Activated T-helper 1 cell treated with anti-CD3 and anti-CD28 coated beads, Interleukin-12 subunit alpha, Interleukin-12 subunit beta, Interleukin-2, Interleukin-4 antibody, amounts not matched to agents 30 ng/mL and 10 ng/mL and 1 ng/mL, durations not matched to agents 14 hours and 24 hours and 36 hours (primary cell): ENCODE measurements at regions of chr2 and their contacts with region 1.

Region 1: GRCh38 chr2:147082850-147083522 is 761.8 kb upstream of the ACVR2A start:
- DNase-seq: peak; percentile 49
- H3K4me3 Mint-ChIP-seq: no peak overlapping the region
- H3K27ac Mint-ChIP-seq: no peak overlapping the region
- H3K4me1 Mint-ChIP-seq: peaks cover 24% of the 10 kb centered on the region
- H3K27me3 Mint-ChIP-seq: peaks cover 5% of the 10 kb centered on the region

Region 2: DNA sequence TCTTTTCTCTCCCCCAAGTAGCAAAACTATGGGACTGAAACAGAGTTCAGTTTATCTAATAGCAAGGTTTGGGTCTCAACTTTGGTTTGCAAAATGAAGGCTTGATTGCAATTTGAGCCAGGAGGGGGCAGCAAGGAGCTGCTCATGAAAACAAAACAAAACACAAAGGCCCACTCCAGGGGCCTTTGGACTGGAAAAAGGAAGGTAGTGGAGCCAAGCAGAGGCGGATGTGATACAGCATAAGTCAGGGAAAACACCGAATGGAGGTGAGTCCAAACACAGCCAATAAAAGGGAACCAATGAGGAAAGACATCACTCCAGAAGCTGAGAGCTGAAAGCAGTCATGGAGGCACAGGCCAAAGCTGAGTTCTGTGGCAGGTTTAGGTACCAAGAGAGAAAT is 37.9 kb before region 1 on chr2:
- intact Hi-C with region 1: loop called (anchors 1 kb)
- DNase-seq: peak; percentile 5
- H3K4me3 Mint-ChIP-seq: no peak overlapping the region
- H3K27ac Mint-ChIP-seq: peak overlapping the region; percentile 7
- H3K4me1 Mint-ChIP-seq: no peaks in the 10 kb centered on the region
- H3K27me3 Mint-ChIP-seq: peaks cover 9% of the 10 kb centered on the region

Region 3: DNA sequence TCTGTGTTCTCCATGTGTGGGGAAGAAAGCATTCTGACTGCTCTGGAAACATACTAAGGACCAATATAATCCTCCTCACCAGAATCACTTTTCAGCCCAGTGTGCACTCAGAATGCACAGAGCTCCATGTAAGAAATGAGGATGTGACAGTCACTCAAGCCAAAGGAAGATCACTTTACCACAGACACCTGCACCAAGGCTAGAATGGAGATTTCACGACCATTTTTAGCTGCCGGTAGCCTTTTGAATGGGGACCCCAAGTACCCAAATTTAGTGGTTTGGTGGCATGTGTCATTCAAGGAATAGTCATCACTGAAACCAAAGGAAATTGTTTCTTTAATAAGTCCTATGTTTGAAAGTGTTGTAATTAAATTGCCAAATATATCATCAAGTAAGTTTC is 148.6 kb after region 1 on chr2:
- intact Hi-C with region 1: loop called (anchors 5 kb)
- DNase-seq: no peak
- H3K4me3 Mint-ChIP-seq: no peak overlapping the region
- H3K27ac Mint-ChIP-seq: no peak overlapping the region
- H3K4me1 Mint-ChIP-seq: peaks cover 8% of the 10 kb centered on the region
- H3K27me3 Mint-ChIP-seq: no peaks in the 10 kb centered on the region

Region 4: DNA sequence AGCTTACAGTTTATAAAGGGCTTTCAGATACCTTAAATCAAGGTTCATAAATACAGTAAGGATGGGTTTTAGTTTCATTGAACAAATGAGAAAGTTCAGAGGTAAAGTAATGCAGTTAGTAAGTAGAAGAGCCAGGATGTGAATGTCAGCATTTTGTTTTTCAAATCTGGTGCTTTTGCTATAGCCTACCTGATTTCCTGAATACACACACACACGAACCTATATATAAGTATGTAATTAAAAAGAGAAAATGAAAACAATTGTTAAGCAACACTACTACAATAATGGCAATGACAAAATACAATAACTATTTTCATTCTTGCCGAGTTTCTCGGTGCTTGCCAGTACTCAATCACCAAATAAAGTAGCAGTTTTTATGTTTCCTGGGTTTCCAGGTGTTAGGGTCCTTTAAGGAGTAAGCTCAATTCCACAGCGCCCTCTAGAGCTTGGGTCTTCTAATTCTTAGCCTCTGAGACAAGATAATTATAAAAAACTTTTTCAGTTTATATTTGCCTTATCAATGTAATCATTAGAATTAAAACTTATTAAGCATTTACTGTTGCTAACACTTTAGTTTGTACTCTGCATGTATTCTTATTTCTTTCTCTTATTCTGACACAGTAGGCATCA is 248.9 kb after region 1 on chr2:
- intact Hi-C with region 1: loop called (anchors 1 kb)
- DNase-seq: peak; percentile 11
- H3K4me3 Mint-ChIP-seq: no peak overlapping the region
- H3K27ac Mint-ChIP-seq: no peak overlapping the region
- H3K4me1 Mint-ChIP-seq: peaks cover 33% of the 10 kb centered on the region
- H3K27me3 Mint-ChIP-seq: peaks cover 6% of the 10 kb centered on the region